T-cell (primary cell): ENCODE measurements at regions of chr11 and their contacts with region 1.

Region 1: GRCh38 chr11:66311965-66312548 is 4.8 kb downstream of the CD248 start:
- DNase-seq: peak; percentile 96 to 100 (median 99)
- ATAC-seq: peak; percentile 75 to 82 (median 77)
- H3K4me3 ChIP-seq: peak overlapping the region; percentile 57 to 71
- H3K4me3 Mint-ChIP-seq: peak overlapping the region; percentile 73 to 90 (median 85)
- H3K27ac ChIP-seq: peak overlapping the region; percentile 92
- H3K27ac Mint-ChIP-seq: peak overlapping the region; percentile 93 to 99
- H3K4me1 ChIP-seq: peaks cover 9 to 52% of the 10 kb centered on the region in 2 experiments
- H3K4me1 Mint-ChIP-seq: peaks cover 24 to 32% (median 29%) of the 10 kb centered on the region in 3 donors
- H3K27me3 ChIP-seq: peaks cover 0 to 14% of the 10 kb centered on the region in 2 experiments
- H3K27me3 Mint-ChIP-seq: peaks cover 0 to 2% of the 10 kb centered on the region in 2 donors

Region 2: DNA sequence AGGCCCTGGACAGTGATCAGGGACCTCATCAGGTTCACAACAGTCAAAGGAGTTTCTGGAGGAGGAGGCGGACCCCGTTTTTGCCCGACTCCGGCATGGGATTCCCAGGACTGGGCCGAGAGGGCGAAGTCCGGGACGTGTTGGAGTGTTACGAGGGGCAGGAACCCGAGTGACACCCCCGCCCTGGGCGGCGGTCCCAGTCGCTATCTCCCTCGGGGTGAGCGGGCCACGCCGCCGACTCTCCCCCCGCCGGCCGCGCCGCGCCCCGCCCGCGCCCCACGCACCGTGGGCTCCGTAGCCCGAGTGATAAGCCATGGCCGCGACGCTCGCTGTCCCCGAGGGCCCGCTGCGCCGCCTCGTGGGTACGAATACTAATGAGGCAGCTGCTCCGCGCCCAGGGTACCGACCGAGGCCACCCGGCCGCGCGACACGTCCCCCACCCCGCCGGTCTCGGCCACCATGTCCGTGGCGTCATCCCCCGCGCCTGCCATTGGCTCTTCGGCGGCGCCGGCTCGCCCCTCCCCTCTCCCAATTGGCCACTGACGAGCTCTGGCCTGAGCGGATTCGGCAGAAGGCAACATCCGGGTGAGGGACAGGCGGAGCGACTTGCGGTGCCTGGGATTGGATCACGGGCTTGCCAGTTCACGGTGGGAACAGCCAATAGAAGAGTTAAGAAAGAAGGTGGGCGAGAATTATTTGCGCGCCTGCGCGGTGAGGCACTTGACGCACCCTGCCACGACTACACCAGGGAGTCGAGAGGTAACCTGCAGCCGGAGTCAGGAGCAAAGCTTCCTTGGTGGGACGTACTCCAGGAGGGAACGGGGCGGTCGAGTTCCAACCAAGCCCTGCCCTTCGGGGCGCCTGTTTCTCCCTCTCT is 23.1 kb before region 1 on chr11 and contains the start of gene YIF1A:
- CTCF ChIA-PET with region 1: interaction called in 1 of 2 experiments, 34 read pairs
- POLR2A ChIA-PET with region 1: interaction called, 4 to 8 read pairs
- DNase-seq: peak; percentile 90 to 99 (median 98)
- ATAC-seq: peak; percentile 91 to 96 (median 94)
- H3K4me3 ChIP-seq: peak within 1 kb of the TSS; percentile 74 to 80
- H3K4me3 Mint-ChIP-seq: peak within 1 kb of the TSS; percentile 84 to 93 (median 89)
- H3K27ac ChIP-seq: peak within 1 kb of the TSS; percentile 72
- H3K27ac Mint-ChIP-seq: peak within 1 kb of the TSS; percentile 84 to 95
- H3K4me1 ChIP-seq: peaks cover 4 to 43% of the 10 kb centered on the region in 2 experiments
- H3K4me1 Mint-ChIP-seq: peaks cover 33 to 46% (median 37%) of the 10 kb centered on the region in 3 donors
- H3K27me3 ChIP-seq: peaks cover 0 to 28% of the 10 kb centered on the region in 2 experiments
- H3K27me3 Mint-ChIP-seq: peaks cover 12 to 19% of the 10 kb centered on the region in 2 donors
- total RNA-seq, gene YIF1A: 24.5 to 63.3 (median 56.9) TPM

Region 3: DNA sequence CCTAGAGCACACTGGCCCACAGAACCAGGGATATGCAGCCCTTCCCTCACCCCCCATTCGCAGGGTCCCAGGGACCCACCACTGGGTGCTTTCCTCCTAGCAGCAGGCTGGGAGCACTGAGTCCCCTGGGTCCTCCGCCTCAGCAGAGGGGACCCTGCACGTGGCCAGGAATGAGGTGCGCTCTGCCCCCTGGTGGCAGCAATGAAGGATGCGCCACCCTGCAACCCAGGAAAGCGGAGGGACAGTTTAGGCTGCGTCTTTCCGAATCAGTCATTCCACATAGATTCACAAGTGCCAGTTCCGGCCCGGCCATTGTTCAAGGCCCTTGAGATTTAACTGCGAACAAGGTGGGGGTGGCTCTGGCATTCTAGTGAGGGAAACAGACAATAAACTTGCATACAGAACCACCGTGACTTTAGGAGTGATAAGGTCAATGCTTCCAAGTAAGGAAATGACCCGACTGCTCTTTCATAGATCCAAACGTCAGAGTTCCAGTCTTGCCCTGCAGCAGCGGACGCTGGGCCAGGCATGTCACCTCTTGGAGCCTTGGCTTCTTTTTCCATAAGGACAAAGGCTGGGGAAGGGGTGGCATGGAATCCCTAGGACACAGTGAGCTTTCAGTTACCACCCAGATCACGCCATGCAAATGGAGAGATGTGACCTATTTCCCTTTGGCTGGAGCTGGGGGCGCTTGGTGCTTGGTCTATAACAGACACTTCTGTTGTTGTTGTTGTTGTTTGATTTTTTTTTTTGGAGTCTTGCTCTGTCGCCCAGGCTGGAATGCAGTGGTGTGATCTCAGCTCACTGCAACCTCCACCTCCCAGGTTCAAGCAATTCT is 16.5 kb after region 1 on chr11:
- CTCF ChIA-PET with region 1: interaction called, 4 to 19 read pairs
- POLR2A ChIA-PET with region 1: interaction called in 1 of 2 experiments, 3 read pairs
- DNase-seq: peak; percentile 54 to 93 (median 76)
- ATAC-seq: peak; percentile 82 to 85 (median 84)
- H3K4me3 ChIP-seq: peak overlapping the region in 1 of 2 donors; percentile 2
- H3K4me3 Mint-ChIP-seq: peak overlapping the region; percentile 14 to 53 (median 21)
- H3K27ac ChIP-seq: peak overlapping the region; percentile 63
- H3K27ac Mint-ChIP-seq: peak overlapping the region; percentile 70 to 93
- H3K4me1 ChIP-seq: peaks cover 30 to 52% of the 10 kb centered on the region in 2 experiments
- H3K4me1 Mint-ChIP-seq: peaks cover 33 to 37% (median 37%) of the 10 kb centered on the region in 3 donors
- H3K27me3 ChIP-seq: peaks cover 0 to 3% of the 10 kb centered on the region in 2 experiments
- H3K27me3 Mint-ChIP-seq: no peaks in the 10 kb centered on the region

Region 4: GRCh38 chr11:66344550-66345315 is 32.7 kb after region 1 on chr11 and contains the start of gene BRMS1:
- CTCF ChIA-PET with region 1: interaction called, 3 to 16 read pairs
- POLR2A ChIA-PET with region 1: interaction called, 3 to 4 read pairs
- DNase-seq: peak; percentile 88 to 99 (median 96)
- ATAC-seq: peak; percentile 79 to 84 (median 81)
- H3K4me3 ChIP-seq: peak within 1 kb of the TSS; percentile 77 to 98
- H3K4me3 Mint-ChIP-seq: peak within 1 kb of the TSS; percentile 95 to 97 (median 96)
- H3K27ac ChIP-seq: peak within 1 kb of the TSS; percentile 71
- H3K27ac Mint-ChIP-seq: peak within 1 kb of the TSS; percentile 92 to 93
- H3K4me1 ChIP-seq: peaks cover 21 to 52% of the 10 kb centered on the region in 2 experiments
- H3K4me1 Mint-ChIP-seq: peaks cover 39 to 56% (median 50%) of the 10 kb centered on the region in 3 donors
- H3K27me3 ChIP-seq: no peaks in the 10 kb centered on the region
- H3K27me3 Mint-ChIP-seq: peaks cover 3% of the 10 kb centered on the region in 2 donors
- total RNA-seq, gene BRMS1: 42.9 to 58.8 (median 54.8) TPM

Region 5: GRCh38 chr11:66386171-66387069 is 74.4 kb after region 1 on chr11:
- CTCF ChIA-PET with region 1: interaction called, 6 to 25 read pairs
- POLR2A ChIA-PET with region 1: no interaction called
- DNase-seq: peak; percentile 51 to 89 (median 77)
- ATAC-seq: peak; percentile 68 to 78 (median 71)
- H3K4me3 ChIP-seq: peak overlapping the region in 1 of 2 donors; percentile 4
- H3K4me3 Mint-ChIP-seq: peak overlapping the region in 2 of 3 donors; percentile 3 to 17
- H3K27ac ChIP-seq: no peak overlapping the region
- H3K27ac Mint-ChIP-seq: no peak overlapping the region
- H3K4me1 ChIP-seq: peaks cover 0 to 12% of the 10 kb centered on the region in 2 experiments
- H3K4me1 Mint-ChIP-seq: peaks cover 6 to 8% (median 6%) of the 10 kb centered on the region in 3 donors
- H3K27me3 ChIP-seq: peaks cover 2 to 29% of the 10 kb centered on the region in 2 experiments
- H3K27me3 Mint-ChIP-seq: peaks cover 0 to 2% of the 10 kb centered on the region in 2 donors

Region 6: GRCh38 chr11:68113986-68114385 is 1801.9 kb after region 1 on chr11:
- CTCF ChIA-PET with region 1: no interaction called
- POLR2A ChIA-PET with region 1: no interaction called
- DNase-seq: no peak
- ATAC-seq: no peak
- H3K4me3 ChIP-seq: no peak overlapping the region
- H3K4me3 Mint-ChIP-seq: no peak overlapping the region
- H3K27ac ChIP-seq: no peak overlapping the region
- H3K27ac Mint-ChIP-seq: no peak overlapping the region
- H3K4me1 ChIP-seq: no peaks in the 10 kb centered on the region
- H3K4me1 Mint-ChIP-seq: peaks cover 3 to 4% (median 4%) of the 10 kb centered on the region in 3 donors
- H3K27me3 ChIP-seq: no peaks in the 10 kb centered on the region
- H3K27me3 Mint-ChIP-seq: no peaks in the 10 kb centered on the region